Naive thymus-derived CD4-positive, alpha-beta T cell (primary cell): ENCODE measurements at regions of chr17 and their contacts with region 1.

Region 1: DNA sequence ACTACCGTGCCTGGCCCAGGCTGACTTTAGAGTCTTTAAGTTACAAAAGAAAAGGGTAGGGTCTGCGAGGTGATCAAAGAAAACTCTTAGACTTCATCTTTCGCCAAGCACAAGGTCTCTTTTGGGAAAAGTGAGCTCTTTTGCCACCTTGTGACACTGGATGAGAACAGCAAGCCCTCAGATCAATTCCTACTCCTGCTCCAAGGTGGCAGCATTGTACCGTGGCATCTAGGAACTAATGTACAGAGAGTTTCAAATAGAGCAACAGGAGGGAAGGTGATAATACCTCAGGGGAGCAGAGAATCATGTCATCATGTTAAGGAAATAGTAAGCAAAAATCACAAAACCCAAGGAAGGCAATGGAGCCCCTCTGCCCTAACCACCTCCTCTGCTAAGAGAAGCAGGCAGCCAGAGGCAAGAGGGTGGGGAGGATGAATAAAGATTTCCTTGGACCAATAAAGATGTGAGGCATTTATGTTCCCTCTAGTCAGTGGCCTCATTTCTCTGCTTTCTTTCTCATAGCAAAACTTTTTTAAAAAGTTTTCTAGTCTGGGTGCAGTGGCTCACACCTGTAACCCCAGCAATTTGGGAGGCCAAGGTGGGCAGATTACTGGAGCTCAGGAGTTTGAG is 2.1 kb upstream of the C17orf78 start:
- DNase-seq: peak in 8 of 9 donors; percentile 41 to 71 (median 63)
- ATAC-seq: peak; percentile 99
- H3K4me3 ChIP-seq: no peak overlapping the region
- H3K4me3 Mint-ChIP-seq: no peak overlapping the region
- H3K27ac ChIP-seq: no peak overlapping the region
- H3K27ac Mint-ChIP-seq: peak overlapping the region in 2 of 9 donors; percentile 2 to 69
- H3K4me1 ChIP-seq: no peaks in the 10 kb centered on the region
- H3K4me1 Mint-ChIP-seq: peaks cover 0 to 8% (median 5%) of the 10 kb centered on the region in 7 donors
- H3K27me3 ChIP-seq: no peaks in the 10 kb centered on the region
- H3K27me3 Mint-ChIP-seq: no peaks in the 10 kb centered on the region

Region 2: GRCh38 chr17:37358830-37359681 is 14.6 kb before region 1 on chr17:
- CTCF ChIA-PET with region 1: interaction called, 3 read pairs
- POLR2A ChIA-PET with region 1: no interaction called
- intact Hi-C with region 1: loop called in 1 of 2 experiments (anchors 1 kb)
- DNase-seq: peak; percentile 81 to 95 (median 85)
- ATAC-seq: peak; percentile 97
- H3K4me3 ChIP-seq: peak overlapping the region; percentile 80
- H3K4me3 Mint-ChIP-seq: peak overlapping the region; percentile 77 to 96 (median 91)
- H3K27ac ChIP-seq: peak overlapping the region; percentile 67
- H3K27ac Mint-ChIP-seq: peak overlapping the region in 7 of 9 donors; percentile 80 to 92 (median 87)
- H3K4me1 ChIP-seq: peaks cover 6 to 14% of the 10 kb centered on the region in 2 donors
- H3K4me1 Mint-ChIP-seq: peaks cover 11 to 28% (median 23%) of the 10 kb centered on the region in 7 donors
- H3K27me3 ChIP-seq: no peaks in the 10 kb centered on the region
- H3K27me3 Mint-ChIP-seq: no peaks in the 10 kb centered on the region

Region 3: GRCh38 chr17:37392024-37392590 is 18.5 kb after region 1 on chr17:
- CTCF ChIA-PET with region 1: interaction called, 13 read pairs
- POLR2A ChIA-PET with region 1: no interaction called
- intact Hi-C with region 1: loop called (anchors 1 kb)
- DNase-seq: no peak
- ATAC-seq: no peak
- H3K4me3 ChIP-seq: no peak overlapping the region
- H3K4me3 Mint-ChIP-seq: peak overlapping the region in 2 of 10 donors; percentile 25 to 27
- H3K27ac ChIP-seq: no peak overlapping the region
- H3K27ac Mint-ChIP-seq: peak overlapping the region in 3 of 9 donors; percentile 15 to 52 (median 47)
- H3K4me1 ChIP-seq: peaks cover 0 to 6% of the 10 kb centered on the region in 2 donors
- H3K4me1 Mint-ChIP-seq: peaks cover 0 to 21% (median 13%) of the 10 kb centered on the region in 7 donors
- H3K27me3 ChIP-seq: no peaks in the 10 kb centered on the region
- H3K27me3 Mint-ChIP-seq: no peaks in the 10 kb centered on the region

Region 4: GRCh38 chr17:37570527-37571093 is 197.0 kb after region 1 on chr17:
- CTCF ChIA-PET with region 1: no interaction called
- POLR2A ChIA-PET with region 1: no interaction called
- intact Hi-C with region 1: loop called in 1 of 2 experiments (anchors 1 kb)
- DNase-seq: peak in 5 of 9 donors; percentile 1 to 25 (median 6)
- ATAC-seq: peak; percentile 48
- H3K4me3 ChIP-seq: no peak overlapping the region
- H3K4me3 Mint-ChIP-seq: no peak overlapping the region
- H3K27ac ChIP-seq: no peak overlapping the region
- H3K27ac Mint-ChIP-seq: peak overlapping the region in 1 of 9 donors; percentile 41
- H3K4me1 ChIP-seq: no peaks in the 10 kb centered on the region
- H3K4me1 Mint-ChIP-seq: peaks cover 2 to 32% (median 11%) of the 10 kb centered on the region in 7 donors
- H3K27me3 ChIP-seq: no peaks in the 10 kb centered on the region
- H3K27me3 Mint-ChIP-seq: no peaks in the 10 kb centered on the region